Motor neuron (in vitro differentiated cells): ENCODE measurements at regions of chr12 and their contacts with region 1.

Region 1: DNA sequence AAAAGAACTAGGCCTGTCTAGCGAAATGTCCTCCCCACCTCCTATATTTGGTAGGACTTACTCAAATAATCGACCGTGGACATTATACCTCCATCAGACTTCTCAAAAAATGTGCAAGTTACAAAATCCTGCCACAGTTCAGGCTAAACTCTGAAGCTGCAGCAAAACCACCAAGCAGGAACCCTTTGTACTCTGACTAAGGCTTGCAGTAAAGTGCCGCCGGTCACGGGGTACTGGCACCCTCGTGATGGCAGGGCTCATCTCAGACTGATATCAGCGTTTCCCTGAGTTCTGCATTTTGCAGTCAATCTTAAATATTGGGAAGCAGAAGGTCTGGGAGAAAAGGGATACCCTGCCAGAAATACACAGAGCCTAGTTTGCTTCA is 17.1 kb downstream of the SLC11A2 start:
- ATAC-seq: peak in 5 of 8 experiments; percentile 25 to 56 (median 34)
- H3K4me3 ChIP-seq: no peak overlapping the region
- H3K27ac ChIP-seq: no peak overlapping the region
- H3K4me1 ChIP-seq: peaks cover 0 to 2% of the 10 kb centered on the region in 2 donors

Region 2: GRCh38 chr12:50708631-50709030 is 300.4 kb before region 1 on chr12:
- in situ Hi-C with region 1: no loop called
- ATAC-seq: no peak
- H3K4me3 ChIP-seq: no peak overlapping the region
- H3K27ac ChIP-seq: no peak overlapping the region
- H3K4me1 ChIP-seq: no peaks in the 10 kb centered on the region

Region 3: GRCh38 chr12:50799908-50800307 is 209.1 kb before region 1 on chr12:
- in situ Hi-C with region 1: loop called in 1 of 9 experiments (anchors 25 kb)
- ATAC-seq: no peak
- H3K4me3 ChIP-seq: no peak overlapping the region
- H3K27ac ChIP-seq: no peak overlapping the region
- H3K4me1 ChIP-seq: no peaks in the 10 kb centered on the region

Region 4: GRCh38 chr12:50918584-50919316 is 90.3 kb before region 1 on chr12:
- in situ Hi-C with region 1: no loop called
- ATAC-seq: no peak
- H3K4me3 ChIP-seq: no peak overlapping the region
- H3K27ac ChIP-seq: no peak overlapping the region
- H3K4me1 ChIP-seq: peaks cover 4 to 17% of the 10 kb centered on the region in 2 donors

Region 5: GRCh38 chr12:51320695-51321320 is 311.8 kb after region 1 on chr12:
- in situ Hi-C with region 1: no loop called
- ATAC-seq: peak in 5 of 8 experiments; percentile 31 to 66 (median 48)
- H3K4me3 ChIP-seq: no peak overlapping the region
- H3K27ac ChIP-seq: no peak overlapping the region
- H3K4me1 ChIP-seq: no peaks in the 10 kb centered on the region

Region 6: DNA sequence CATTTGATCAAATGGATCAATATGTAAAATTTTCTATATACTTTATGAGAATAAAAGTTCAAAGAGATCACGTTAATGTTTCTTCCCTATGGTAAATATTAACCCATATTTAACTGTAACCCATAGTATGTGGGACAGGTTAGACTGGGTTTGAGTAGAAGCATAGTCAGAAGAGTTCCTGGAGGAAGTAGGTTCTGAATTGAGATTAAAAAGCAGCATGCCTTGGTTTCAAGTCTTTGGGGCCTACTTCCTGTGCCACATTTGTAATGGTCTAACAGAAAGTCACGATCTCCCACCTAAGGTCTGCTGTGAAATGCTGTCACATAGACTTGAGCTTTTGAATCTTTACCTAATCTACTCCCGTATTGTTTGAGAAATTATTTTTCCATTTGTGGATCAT is 775.6 kb after region 1 on chr12:
- in situ Hi-C with region 1: no loop called
- ATAC-seq: no peak
- H3K4me3 ChIP-seq: no peak overlapping the region
- H3K27ac ChIP-seq: no peak overlapping the region
- H3K4me1 ChIP-seq: no peaks in the 10 kb centered on the region